Heart left ventricle (tissue), 16 donors: ENCODE measurements at regions of chr11 and their contacts with region 1.

Region 1: GRCh38 chr11:94826415-94826814 is 58.3 kb downstream of the AMOTL1 start:
- DNase-seq: no peak
- ATAC-seq: no peak
- H3K4me3 ChIP-seq: no peak overlapping the region
- H3K27ac ChIP-seq: no peak overlapping the region
- H3K4me1 ChIP-seq: peaks cover 0 to 16% (median 0%) of the 10 kb centered on the region in 12 donors
- H3K27me3 ChIP-seq: no peaks in the 10 kb centered on the region
- CTCF ChIP-seq: no peak
- POLR2A ChIP-seq: no peak

Region 2: DNA sequence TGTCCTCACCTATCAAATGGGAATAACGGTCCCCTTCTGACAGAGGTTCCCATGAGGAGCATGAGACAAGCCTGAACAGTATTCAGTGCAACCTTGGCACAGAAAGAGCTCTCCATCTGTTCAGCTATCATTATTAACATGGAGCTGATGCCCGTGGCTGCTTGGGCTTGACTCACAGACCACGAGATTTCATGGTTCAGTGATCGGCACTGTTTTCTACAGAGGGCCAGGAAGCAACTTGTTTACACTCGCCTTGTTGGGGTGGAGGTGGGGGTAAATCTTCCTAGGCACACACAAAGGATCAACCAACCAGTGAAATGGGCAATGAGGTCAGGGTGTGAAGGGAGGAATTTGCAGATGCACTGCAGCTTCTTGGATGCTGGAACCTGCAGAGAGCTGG is 58.7 kb after region 1 on chr11:
- intact Hi-C with region 1: loop called in 1 of 10 experiments (anchors 10 kb)
- DNase-seq: no peak
- ATAC-seq: no peak
- H3K4me3 ChIP-seq: no peak overlapping the region
- H3K27ac ChIP-seq: no peak overlapping the region
- H3K4me1 ChIP-seq: no peaks in the 10 kb centered on the region
- H3K27me3 ChIP-seq: no peaks in the 10 kb centered on the region
- CTCF ChIP-seq: no peak
- POLR2A ChIP-seq: no peak